ENCODE measurements at regions of chr11 and their contacts with region 1.

Region 1: DNA sequence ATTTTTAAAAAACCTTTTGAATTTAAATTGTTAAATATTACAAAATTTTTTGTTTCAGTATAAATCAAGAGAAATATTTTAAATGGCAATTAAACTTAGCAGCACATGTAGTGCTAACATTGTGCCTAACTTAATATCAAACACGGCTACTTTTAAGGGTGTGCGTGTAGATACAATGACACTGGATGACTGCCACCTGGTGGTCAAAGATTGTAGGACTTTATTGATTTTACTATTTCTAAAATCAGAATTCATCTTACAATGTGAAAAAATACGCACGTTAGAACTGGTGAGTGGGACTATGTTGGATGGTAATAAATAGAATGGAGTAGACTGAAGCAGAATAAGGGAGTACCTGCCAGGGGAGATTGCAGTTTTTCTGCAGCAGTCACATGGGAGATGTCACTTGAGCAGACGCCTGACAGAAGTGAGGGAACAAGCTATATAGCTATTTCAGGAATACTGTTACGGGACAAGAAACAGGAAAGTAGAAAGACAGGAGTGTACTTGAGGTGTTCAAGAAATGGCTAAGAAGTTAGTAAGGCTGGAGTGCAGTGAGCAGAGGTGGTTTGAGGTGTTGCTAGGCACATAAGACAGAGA is 52.9 kb downstream of the UVRAG start:
- DNase-seq: peak in 1 of 2 donors; percentile 47
- H3K4me3 ChIP-seq: no peak overlapping the region
- H3K27ac ChIP-seq: no peak overlapping the region
- H3K4me1 ChIP-seq: no peaks in the 10 kb centered on the region
- H3K27me3 ChIP-seq: no peaks in the 10 kb centered on the region
- CTCF ChIP-seq: peak; percentile 67 to 90 (median 80)
- POLR2A ChIP-seq: no peak

Region 2: GRCh38 chr11:75597636-75598035 is 270.2 kb before region 1 on chr11:
- intact Hi-C with region 1: no loop called
- DNase-seq: no peak
- H3K4me3 ChIP-seq: no peak overlapping the region
- H3K27ac ChIP-seq: no peak overlapping the region
- H3K4me1 ChIP-seq: no peaks in the 10 kb centered on the region
- H3K27me3 ChIP-seq: no peaks in the 10 kb centered on the region
- CTCF ChIP-seq: no peak
- POLR2A ChIP-seq: no peak

Region 3: GRCh38 chr11:75802913-75803820 is 64.7 kb before region 1 on chr11:
- intact Hi-C with region 1: loop called (anchors 5 kb)
- DNase-seq: peak; percentile 71 to 76
- H3K4me3 ChIP-seq: no peak overlapping the region
- H3K27ac ChIP-seq: no peak overlapping the region
- H3K4me1 ChIP-seq: no peaks in the 10 kb centered on the region
- H3K27me3 ChIP-seq: no peaks in the 10 kb centered on the region
- CTCF ChIP-seq: peak; percentile 84 to 94 (median 87)
- POLR2A ChIP-seq: no peak